ENCODE measurements at regions of chr11 and their contacts with region 1.

Region 1: GRCh38 chr11:98243897-98244296 is 776.9 kb upstream of the CNTN5 start:
- DNase-seq: no peak
- ATAC-seq: no peak
- H3K4me3 ChIP-seq: no peak overlapping the region
- H3K4me3 Mint-ChIP-seq: no peak overlapping the region
- H3K27ac ChIP-seq: no peak overlapping the region
- H3K27ac Mint-ChIP-seq: no peak overlapping the region
- H3K4me1 ChIP-seq: no peaks in the 10 kb centered on the region
- H3K4me1 Mint-ChIP-seq: no peaks in the 10 kb centered on the region
- H3K27me3 ChIP-seq: no peaks in the 10 kb centered on the region
- H3K27me3 Mint-ChIP-seq: no peaks in the 10 kb centered on the region
- CTCF ChIP-seq: no peak

Region 2: GRCh38 chr11:98207086-98207485 is 36.8 kb before region 1 on chr11:
- CTCF ChIA-PET with region 1: no interaction called
- POLR2A ChIA-PET with region 1: no interaction called
- intact Hi-C with region 1: loop called in 1 of 2 experiments (anchors 1 kb)
- DNase-seq: no peak
- ATAC-seq: no peak
- H3K4me3 ChIP-seq: no peak overlapping the region
- H3K4me3 Mint-ChIP-seq: no peak overlapping the region
- H3K27ac ChIP-seq: no peak overlapping the region
- H3K27ac Mint-ChIP-seq: no peak overlapping the region
- H3K4me1 ChIP-seq: no peaks in the 10 kb centered on the region
- H3K4me1 Mint-ChIP-seq: no peaks in the 10 kb centered on the region
- H3K27me3 ChIP-seq: no peaks in the 10 kb centered on the region
- H3K27me3 Mint-ChIP-seq: no peaks in the 10 kb centered on the region
- CTCF ChIP-seq: no peak

Measured in CD8-positive, alpha-beta T cell (primary cell).